Activated CD4-positive, alpha-beta memory T cell treated with anti-CD3 and anti-CD28 coated beads, Interleukin-2, amount 10 ng/mL, durations not matched to agents 7 days and 5 days (primary cell): ENCODE measurements at regions of chr2 and their contacts with region 1.

Region 1: GRCh38 chr2:237744613-237745249 is 53.8 kb upstream of the RBM44 start:
- DNase-seq: peak; percentile 75
- H3K4me3 Mint-ChIP-seq: no peak overlapping the region
- H3K27ac Mint-ChIP-seq: peak overlapping the region; percentile 64
- H3K4me1 Mint-ChIP-seq: peaks cover 29% of the 10 kb centered on the region
- H3K27me3 Mint-ChIP-seq: no peaks in the 10 kb centered on the region

Region 2: DNA sequence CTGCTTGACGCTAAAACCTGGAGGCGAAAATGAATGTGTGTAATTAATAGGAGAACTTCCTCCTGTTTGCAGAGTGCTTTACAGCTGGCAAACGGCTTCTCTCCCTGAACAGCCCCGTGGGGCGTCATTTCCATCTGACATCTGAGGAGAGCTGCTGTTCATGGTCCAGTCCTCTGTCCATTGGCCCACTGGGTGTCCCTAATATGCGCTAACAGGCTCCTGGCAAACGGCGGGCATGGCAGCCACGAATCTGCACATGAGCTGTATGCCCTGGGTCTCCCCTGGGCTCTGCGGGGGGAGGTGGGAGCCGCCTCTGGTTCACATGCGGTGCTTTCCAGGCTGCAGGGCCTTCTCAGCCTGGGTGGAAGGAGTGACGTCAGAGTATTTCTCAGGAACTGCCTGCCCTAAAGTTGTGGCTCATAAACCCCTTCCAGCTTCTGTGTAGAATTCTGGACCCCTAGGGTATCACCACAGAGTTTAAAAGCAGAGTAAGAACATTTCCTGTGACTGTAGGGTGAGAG is 44.2 kb before region 1 on chr2:
- CTCF ChIA-PET with region 1: interaction called, 12 read pairs
- POLR2A ChIA-PET with region 1: interaction called, 4 read pairs
- DNase-seq: peak; percentile 70
- H3K4me3 Mint-ChIP-seq: peak overlapping the region; percentile 45
- H3K27ac Mint-ChIP-seq: peak overlapping the region; percentile 88
- H3K4me1 Mint-ChIP-seq: peaks cover 96% of the 10 kb centered on the region
- H3K27me3 Mint-ChIP-seq: no peaks in the 10 kb centered on the region

Region 3: GRCh38 chr2:237708065-237708398 is 36.7 kb before region 1 on chr2:
- CTCF ChIA-PET with region 1: interaction called, 10 read pairs
- POLR2A ChIA-PET with region 1: interaction called, 3 read pairs
- DNase-seq: no peak
- H3K4me3 Mint-ChIP-seq: no peak overlapping the region
- H3K27ac Mint-ChIP-seq: no peak overlapping the region
- H3K4me1 Mint-ChIP-seq: peaks cover 62% of the 10 kb centered on the region
- H3K27me3 Mint-ChIP-seq: no peaks in the 10 kb centered on the region